ENCODE measurements at regions of chr4 and their contacts with region 1.

Region 1: GRCh38 chr4:107050525-107051135 is 14.5 kb upstream of the DKK2 start:
- DNase-seq: peak; percentile 38
- H3K4me3 Mint-ChIP-seq: no peak overlapping the region
- H3K27ac Mint-ChIP-seq: no peak overlapping the region
- H3K4me1 Mint-ChIP-seq: no peaks in the 10 kb centered on the region
- H3K27me3 Mint-ChIP-seq: no peaks in the 10 kb centered on the region
- CTCF ChIP-seq: peak; percentile 59

Region 2: DNA sequence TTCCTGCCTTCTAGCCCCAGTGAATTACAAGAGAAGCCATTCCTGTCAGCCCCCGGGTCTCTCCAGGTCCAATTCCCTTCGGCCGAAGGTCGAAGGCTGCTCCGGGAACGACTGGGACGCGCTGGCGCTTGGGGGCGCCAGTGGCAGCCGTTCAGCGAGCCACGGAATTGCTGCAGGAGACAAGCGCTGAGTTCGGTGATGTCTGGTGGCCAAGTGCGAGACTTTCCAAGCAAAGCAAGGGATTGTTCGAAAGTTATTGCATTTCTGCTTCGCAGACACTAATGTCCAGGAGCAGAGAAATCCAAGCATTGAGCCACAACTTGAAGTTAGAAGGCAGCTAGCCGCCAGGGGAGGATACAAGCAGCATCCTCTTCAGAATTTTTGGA is 13.4 kb before region 1 on chr4:
- CTCF ChIA-PET with region 1: interaction called, 11 read pairs
- POLR2A ChIA-PET with region 1: no interaction called
- intact Hi-C with region 1: no loop called
- DNase-seq: peak; percentile 48
- H3K4me3 Mint-ChIP-seq: peak overlapping the region; percentile 91
- H3K27ac Mint-ChIP-seq: no peak overlapping the region
- H3K4me1 Mint-ChIP-seq: peaks cover 24% of the 10 kb centered on the region
- H3K27me3 Mint-ChIP-seq: peaks cover 49% of the 10 kb centered on the region
- CTCF ChIP-seq: peak; percentile 25